Activated T-helper 2 cell treated with anti-CD3 and anti-CD28 coated beads, Interferon-gamma antibody, Interleukin-2, Interleukin-4, amounts not matched to agents 10 μg/mL and 5 μg/mL and 100 μg/mL, durations not matched to agents 14 hours and 24 hours and 36 hours (primary cell): ENCODE measurements at regions of chr16 and their contacts with region 1.

Region 1: DNA sequence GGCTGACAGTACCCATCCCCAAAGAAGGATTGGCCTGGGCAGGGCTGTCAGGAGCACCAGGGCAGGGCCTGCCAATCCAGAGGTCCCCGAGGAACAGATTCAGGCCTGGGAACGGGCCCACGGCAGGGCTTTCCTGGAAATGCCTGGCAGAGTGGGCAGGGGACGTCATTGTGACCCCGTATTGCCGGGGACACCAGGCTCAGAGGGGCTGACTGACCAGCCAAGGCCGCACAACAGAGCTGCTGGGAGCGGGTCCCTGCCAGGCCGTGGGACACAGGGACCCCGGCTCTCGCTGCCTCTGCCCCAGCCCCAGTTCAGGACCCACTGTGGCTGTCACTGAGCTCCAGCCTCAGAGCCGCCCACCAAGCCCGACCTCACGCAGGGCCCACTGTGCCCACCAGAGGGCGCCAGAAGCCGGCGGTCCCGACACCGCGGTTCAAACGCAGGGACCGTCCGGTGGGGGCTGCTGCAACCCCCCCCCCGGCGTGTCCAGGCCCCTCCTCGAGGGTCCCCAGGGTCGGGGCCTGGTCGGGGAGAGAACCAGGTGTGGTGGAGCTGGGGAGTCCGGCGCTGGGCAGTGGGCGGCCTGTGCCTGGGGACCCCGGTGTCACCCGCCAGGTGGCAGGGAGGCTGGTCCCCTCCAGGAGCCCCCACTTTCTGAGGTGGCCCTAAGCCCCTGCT is 15.2 kb upstream of the SSTR5 start:
- DNase-seq: peak; percentile 21
- H3K4me3 Mint-ChIP-seq: no peak overlapping the region
- H3K27ac Mint-ChIP-seq: no peak overlapping the region
- H3K4me1 Mint-ChIP-seq: no peaks in the 10 kb centered on the region
- H3K27me3 Mint-ChIP-seq: no peaks in the 10 kb centered on the region

Region 2: GRCh38 chr16:813204-813915 is 244.0 kb before region 1 on chr16:
- intact Hi-C with region 1: loop called (anchors 2 kb)
- DNase-seq: peak; percentile 40
- H3K4me3 Mint-ChIP-seq: no peak overlapping the region
- H3K27ac Mint-ChIP-seq: no peak overlapping the region
- H3K4me1 Mint-ChIP-seq: peaks cover 4% of the 10 kb centered on the region
- H3K27me3 Mint-ChIP-seq: peaks cover 15% of the 10 kb centered on the region